ENCODE measurements at regions of chr2 and their contacts with region 1.

Region 1: GRCh38 chr2:27249891-27250651 is 12.8 kb downstream of the SLC30A3 start:
- DNase-seq: peak; percentile 74
- ATAC-seq: peak; percentile 79 to 85

Region 2: GRCh38 chr2:26561918-26562810 is 687.9 kb before region 1 on chr2:
- intact Hi-C with region 1: no loop called
- DNase-seq: peak; percentile 60
- ATAC-seq: peak; percentile 76 to 80

Region 3: DNA sequence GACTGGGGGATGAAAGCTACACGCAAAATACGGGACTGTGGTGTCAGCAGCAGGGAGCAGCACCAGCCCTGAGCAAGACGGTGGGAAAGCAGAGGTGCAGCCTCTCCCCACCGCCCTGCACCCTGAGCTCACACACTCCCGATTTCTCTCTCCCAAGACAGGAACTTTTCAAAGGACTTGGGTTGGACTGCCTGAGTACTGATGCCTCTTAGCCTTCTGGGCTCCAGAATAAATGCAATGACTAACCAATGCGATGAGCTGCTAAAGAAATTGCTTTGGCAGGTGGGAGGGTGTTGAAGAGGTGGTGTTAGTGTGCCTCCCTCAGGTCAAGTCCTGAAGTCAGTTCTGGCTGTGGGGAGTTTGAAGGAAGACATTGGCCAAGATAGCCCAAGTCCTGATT is 41.8 kb after region 1 on chr2:
- intact Hi-C with region 1: loop called in 1 of 2 experiments (anchors 10 kb)
- DNase-seq: no peak
- ATAC-seq: peak; percentile 54 to 60

Region 4: GRCh38 chr2:27303093-27304025 is 53.3 kb after region 1 on chr2:
- intact Hi-C with region 1: loop called (anchors 2 to 10 kb)
- DNase-seq: peak; percentile 40
- ATAC-seq: peak; percentile 53 to 65

Region 5: GRCh38 chr2:27370026-27370815 is 120.2 kb after region 1 on chr2 and contains the starts of genes EIF2B4 and SNX17:
- intact Hi-C with region 1: no loop called
- DNase-seq: peak; percentile 99
- ATAC-seq: peak; percentile 95
- total RNA-seq, gene EIF2B4: 32.1 to 40.0 TPM
- total RNA-seq, gene SNX17: 61.4 to 74.3 TPM

Region 6: DNA sequence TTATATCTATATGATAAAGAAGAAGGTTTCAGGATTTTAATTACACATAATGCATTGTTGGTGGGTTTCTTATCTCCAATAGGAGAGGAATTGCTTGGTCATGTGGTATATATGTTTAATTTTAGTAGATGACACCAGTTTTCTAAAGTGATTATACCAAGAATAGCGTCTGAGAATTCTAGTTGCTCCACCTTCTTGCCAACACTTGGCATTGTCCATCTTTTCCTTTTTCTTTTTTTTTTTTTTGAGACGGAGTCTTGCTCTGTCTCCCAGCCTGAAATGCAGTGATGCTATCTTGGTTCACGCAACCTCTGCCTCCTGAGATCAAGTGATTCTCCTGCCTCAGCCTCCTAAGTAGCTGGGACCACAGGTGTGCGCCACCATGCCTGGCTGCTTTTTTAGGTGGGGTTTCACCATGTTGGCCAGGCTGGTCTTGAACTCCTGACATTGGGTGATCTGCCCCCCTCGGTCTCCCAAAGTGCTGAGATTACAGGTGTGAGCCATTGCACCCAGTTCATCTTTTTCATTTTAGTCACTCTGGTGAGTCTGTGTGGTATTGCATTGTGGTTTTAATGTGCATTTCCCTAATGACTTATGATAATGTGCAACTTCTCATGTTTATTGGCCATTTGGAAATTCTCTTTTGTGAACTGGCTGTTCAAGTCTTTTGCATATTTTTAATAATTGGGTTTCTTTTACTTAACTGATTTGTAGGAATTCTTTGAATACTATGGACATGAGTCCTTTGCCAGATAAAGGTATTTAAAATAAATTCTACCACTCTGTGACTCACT is 295.5 kb after region 1 on chr2:
- intact Hi-C with region 1: no loop called
- DNase-seq: no peak
- ATAC-seq: no peak

Measured in left cardiac atrium (tissue), 4 donors.